Dendritic cell treated with granulocyte-macrophage colony-stimulating factor and Interleukin-4, amounts not matched to agents 40 ng/mL and 50 ng/mL, for 4 days (primary cell): ENCODE measurements at regions of chr5 and their contacts with region 1.

Region 1: GRCh38 chr5:138128334-138128733 is 10.9 kb downstream of the NME5 start:
- H3K4me3 Mint-ChIP-seq: no peak overlapping the region
- H3K27ac Mint-ChIP-seq: no peak overlapping the region
- H3K4me1 Mint-ChIP-seq: no peaks in the 10 kb centered on the region
- H3K27me3 Mint-ChIP-seq: peaks cover 24% of the 10 kb centered on the region

Region 2: GRCh38 chr5:137778772-137779564 is 349.4 kb before region 1 on chr5:
- intact Hi-C with region 1: loop called (anchors 5 kb)
- H3K4me3 Mint-ChIP-seq: no peak overlapping the region
- H3K27ac Mint-ChIP-seq: no peak overlapping the region
- H3K4me1 Mint-ChIP-seq: no peaks in the 10 kb centered on the region
- H3K27me3 Mint-ChIP-seq: no peaks in the 10 kb centered on the region

Region 3: GRCh38 chr5:138077065-138077696 is 51.2 kb before region 1 on chr5:
- intact Hi-C with region 1: loop called (anchors 1 kb)
- H3K4me3 Mint-ChIP-seq: no peak overlapping the region
- H3K27ac Mint-ChIP-seq: no peak overlapping the region
- H3K4me1 Mint-ChIP-seq: peaks cover 17% of the 10 kb centered on the region
- H3K27me3 Mint-ChIP-seq: peaks cover 13% of the 10 kb centered on the region